Esophagus muscularis mucosa (tissue), 4 donors: ENCODE measurements at regions of chr14 and their contacts with region 1.

Region 1: DNA sequence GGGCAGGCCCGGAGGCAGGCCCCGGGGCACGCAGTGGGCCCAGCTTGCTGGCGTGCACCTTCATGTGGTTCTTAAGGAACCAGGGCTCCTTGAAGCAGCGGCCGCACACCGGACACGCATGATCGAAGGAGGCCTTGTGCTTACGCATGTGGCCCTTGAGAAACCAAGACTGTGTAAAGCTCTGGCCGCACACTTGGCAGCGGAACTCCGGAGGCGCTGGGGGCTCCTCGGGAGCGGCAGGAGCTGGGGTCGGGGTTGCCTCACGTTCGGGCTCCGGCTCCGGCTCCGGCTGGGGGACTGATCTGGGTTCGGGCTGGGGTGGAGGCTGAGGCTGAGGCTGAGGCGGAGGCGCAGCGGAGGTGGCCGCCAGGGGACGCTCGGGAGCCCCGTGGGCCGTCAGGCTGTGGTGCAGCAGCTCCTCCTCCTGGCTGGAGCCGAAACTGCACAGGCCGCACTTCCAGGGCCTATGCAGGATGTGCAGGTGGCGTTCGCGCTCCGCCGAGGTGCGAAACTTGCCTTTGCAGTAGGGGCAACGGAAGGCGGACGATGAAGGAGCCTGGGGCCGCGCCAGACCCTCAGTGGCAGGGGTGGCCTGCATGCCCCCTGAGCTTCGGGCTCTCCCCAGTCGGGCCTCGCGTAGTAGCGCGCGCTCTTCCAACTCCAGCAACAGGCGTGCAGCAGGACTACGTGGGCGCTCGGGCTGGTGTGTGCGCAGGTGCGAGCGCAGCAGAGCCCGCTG is 6.0 kb downstream of the ZNF219 start:
- DNase-seq: no peak
- H3K4me3 ChIP-seq: no peak overlapping the region
- H3K27ac ChIP-seq: peak overlapping the region; percentile 28 to 70 (median 38)
- H3K4me1 ChIP-seq: peaks cover 13 to 71% (median 59%) of the 10 kb centered on the region in 4 donors
- H3K27me3 ChIP-seq: no peaks in the 10 kb centered on the region
- CTCF ChIP-seq: peak in 2 of 3 experiments; percentile 100
- EP300 ChIP-seq: no peak
- POLR2A ChIP-seq: peak; percentile 28

Region 2: DNA sequence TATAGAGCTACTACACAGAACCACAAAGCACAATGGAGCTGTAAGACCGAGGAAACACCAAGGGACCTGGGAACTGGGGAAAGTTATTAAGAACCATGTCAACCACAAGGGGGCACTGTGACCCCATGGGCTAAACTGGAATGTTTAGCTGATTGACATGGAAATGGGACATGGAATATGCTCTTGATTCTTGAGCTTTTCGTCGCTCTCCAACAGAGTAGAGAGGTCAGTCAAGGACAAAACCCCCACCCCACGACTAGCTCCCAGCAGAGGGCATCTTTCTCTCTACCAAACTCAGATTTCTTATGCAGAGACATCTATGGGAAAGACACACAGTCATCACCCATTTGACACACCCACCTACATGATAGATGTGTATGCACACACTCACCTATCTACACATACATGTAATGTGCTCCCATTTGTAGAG is 77.7 kb before region 1 on chr14:
- intact Hi-C with region 1: loop called (anchors 5 kb)
- DNase-seq: peak; percentile 95
- H3K4me3 ChIP-seq: no peak overlapping the region
- H3K27ac ChIP-seq: peak overlapping the region in 1 of 4 donors; percentile 15
- H3K4me1 ChIP-seq: peaks cover 0 to 28% (median 15%) of the 10 kb centered on the region in 4 donors
- H3K27me3 ChIP-seq: no peaks in the 10 kb centered on the region
- CTCF ChIP-seq: peak; percentile 90 to 92 (median 91)
- EP300 ChIP-seq: no peak
- POLR2A ChIP-seq: no peak

Region 3: GRCh38 chr14:21071225-21072030 is 21.0 kb before region 1 on chr14:
- intact Hi-C with region 1: loop called (anchors 2 kb)
- DNase-seq: no peak
- H3K4me3 ChIP-seq: peak overlapping the region; percentile 76 to 86 (median 81)
- H3K27ac ChIP-seq: peak overlapping the region; percentile 88 to 90 (median 90)
- H3K4me1 ChIP-seq: peaks cover 33 to 56% (median 50%) of the 10 kb centered on the region in 4 donors
- H3K27me3 ChIP-seq: no peaks in the 10 kb centered on the region
- CTCF ChIP-seq: no peak
- EP300 ChIP-seq: no peak
- POLR2A ChIP-seq: no peak

Region 4: DNA sequence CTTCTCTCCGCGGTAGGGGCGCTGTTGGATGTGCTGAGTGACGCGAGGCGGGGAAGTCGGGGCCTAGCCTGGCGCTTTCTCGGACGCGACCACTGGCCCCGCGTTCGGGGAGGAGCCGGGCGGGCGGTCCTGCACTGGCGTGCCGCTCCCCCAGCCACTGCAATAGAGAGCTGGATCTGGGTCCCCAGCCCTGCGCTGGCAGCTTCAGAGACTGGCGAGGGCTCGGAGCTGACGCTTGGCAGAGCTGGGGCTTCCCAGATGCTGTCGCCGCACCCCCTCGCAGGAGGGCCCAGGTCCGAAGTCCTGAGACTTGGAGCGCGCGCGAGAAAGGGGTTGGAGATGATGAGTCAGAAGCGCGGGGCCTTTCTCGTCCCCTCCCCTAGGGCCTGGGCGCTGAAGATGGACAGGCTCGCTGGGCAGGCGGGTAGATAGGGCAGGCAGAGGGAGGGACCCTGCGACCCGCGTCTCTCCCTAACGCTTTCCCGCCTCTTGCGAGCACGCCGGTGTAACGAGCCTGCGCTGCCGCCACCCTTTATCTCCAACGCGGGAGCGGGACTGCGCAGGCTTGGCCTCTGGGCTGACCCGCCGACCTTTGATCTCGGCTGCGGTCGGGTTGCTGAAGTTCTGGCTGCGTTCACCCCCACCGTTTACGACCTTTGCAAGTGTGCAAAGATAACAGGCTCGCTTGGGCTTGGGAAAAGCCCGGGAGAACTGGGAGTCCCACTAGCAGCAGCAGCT is 11.4 kb after region 1 on chr14:
- intact Hi-C with region 1: loop called (anchors 1 kb)
- DNase-seq: peak; percentile 99
- H3K4me3 ChIP-seq: peak overlapping the region; percentile 62 to 75 (median 71)
- H3K27ac ChIP-seq: peak overlapping the region; percentile 93 to 99 (median 98)
- H3K4me1 ChIP-seq: peaks cover 44 to 60% (median 57%) of the 10 kb centered on the region in 4 donors
- H3K27me3 ChIP-seq: no peaks in the 10 kb centered on the region
- CTCF ChIP-seq: peak; percentile 49 to 86 (median 68)
- EP300 ChIP-seq: no peak
- POLR2A ChIP-seq: peak; percentile 75

Region 5: DNA sequence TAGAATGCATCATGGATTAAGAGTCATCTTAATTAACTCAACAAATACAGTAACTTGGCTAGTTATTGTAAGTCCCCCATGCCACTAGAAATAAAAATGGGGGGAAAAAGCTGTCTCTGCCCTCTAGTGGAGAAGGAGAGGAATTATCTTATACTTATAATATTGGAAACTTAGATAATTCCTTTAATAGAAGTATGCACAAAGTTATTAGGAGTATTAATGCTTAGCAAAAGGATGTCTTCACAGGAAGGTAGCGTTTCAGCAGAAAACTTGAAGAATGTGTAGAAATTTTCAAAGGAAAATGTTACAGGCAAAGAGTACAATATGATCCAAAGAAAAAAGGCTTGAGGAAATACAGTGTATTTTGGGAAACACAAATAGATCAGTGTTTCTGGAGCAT is 43.6 kb after region 1 on chr14:
- intact Hi-C with region 1: no loop called
- DNase-seq: no peak
- H3K4me3 ChIP-seq: no peak overlapping the region
- H3K27ac ChIP-seq: no peak overlapping the region
- H3K4me1 ChIP-seq: no peaks in the 10 kb centered on the region
- H3K27me3 ChIP-seq: no peaks in the 10 kb centered on the region
- CTCF ChIP-seq: peak; percentile 48 to 64 (median 57)
- EP300 ChIP-seq: no peak
- POLR2A ChIP-seq: no peak

Region 6: GRCh38 chr14:21269252-21270046 is 177.0 kb after region 1 on chr14 and contains the start of gene HNRNPC:
- intact Hi-C with region 1: loop called (anchors 10 kb)
- DNase-seq: peak; percentile 100
- H3K4me3 ChIP-seq: peak within 1 kb of the TSS; percentile 87 to 93 (median 88)
- H3K27ac ChIP-seq: peak within 1 kb of the TSS; percentile 94 to 99 (median 96)
- H3K4me1 ChIP-seq: peaks cover 35 to 50% (median 47%) of the 10 kb centered on the region in 4 donors
- H3K27me3 ChIP-seq: no peaks in the 10 kb centered on the region
- CTCF ChIP-seq: peak in 1 of 3 experiments; percentile 41
- EP300 ChIP-seq: no peak
- POLR2A ChIP-seq: peak; percentile 99
- total RNA-seq, gene HNRNPC: 260 to 396 (median 292) TPM

Region 7: DNA sequence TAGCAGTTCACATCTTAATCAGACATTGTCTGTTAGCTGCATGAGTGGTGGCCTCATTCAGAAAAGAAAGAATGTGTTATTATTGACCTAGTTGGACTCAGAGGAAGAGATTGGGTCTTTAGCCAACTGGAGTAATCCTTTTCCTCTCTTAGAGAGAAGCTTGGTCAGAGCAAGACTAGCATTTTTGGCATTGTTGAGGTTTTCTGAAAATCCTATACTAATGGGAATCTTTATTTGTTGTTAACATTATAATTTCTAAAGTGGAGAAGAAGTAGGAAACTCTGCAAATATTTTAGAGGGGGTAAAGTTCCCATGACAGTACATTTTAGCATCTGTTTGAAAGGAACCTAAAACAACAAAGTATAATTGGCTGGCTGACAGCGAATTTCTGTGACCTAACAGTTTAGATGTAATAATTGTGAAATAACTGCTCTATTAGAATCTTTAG is 394.2 kb after region 1 on chr14:
- intact Hi-C with region 1: no loop called
- DNase-seq: no peak
- H3K4me3 ChIP-seq: no peak overlapping the region
- H3K27ac ChIP-seq: no peak overlapping the region
- H3K4me1 ChIP-seq: peaks cover 0 to 13% (median 5%) of the 10 kb centered on the region in 4 donors
- H3K27me3 ChIP-seq: no peaks in the 10 kb centered on the region
- CTCF ChIP-seq: no peak
- EP300 ChIP-seq: no peak
- POLR2A ChIP-seq: no peak